Ovary (tissue), 10 donors: ENCODE measurements at regions of chr2 and their contacts with region 1.

Region 1: DNA sequence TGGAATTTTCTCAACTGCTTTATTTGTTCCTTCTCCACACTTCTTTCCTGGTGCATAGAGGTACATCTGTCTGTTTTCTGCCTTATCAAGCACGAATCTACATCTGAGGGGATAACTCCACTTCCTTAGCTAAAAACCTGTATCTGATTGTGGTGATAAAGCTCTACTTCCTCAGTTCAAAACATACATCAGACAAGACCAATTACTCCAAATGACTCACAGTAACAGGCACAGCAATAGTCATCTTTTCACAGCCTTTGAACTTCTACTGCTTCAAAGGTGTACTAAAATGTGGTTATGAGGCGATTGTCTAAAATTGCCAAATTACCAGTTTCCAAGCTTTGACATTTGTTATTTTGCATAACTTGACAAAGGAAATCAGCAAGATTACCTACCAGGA is 803.6 kb upstream of the ZEB2 start:
- DNase-seq: no peak
- H3K4me3 ChIP-seq: no peak overlapping the region
- H3K27ac ChIP-seq: no peak overlapping the region
- H3K4me1 ChIP-seq: peaks cover 2% of the 10 kb centered on the region
- H3K27me3 ChIP-seq: no peaks in the 10 kb centered on the region
- CTCF ChIP-seq: no peak
- EP300 ChIP-seq: no peak
- POLR2A ChIP-seq: no peak

Region 2: DNA sequence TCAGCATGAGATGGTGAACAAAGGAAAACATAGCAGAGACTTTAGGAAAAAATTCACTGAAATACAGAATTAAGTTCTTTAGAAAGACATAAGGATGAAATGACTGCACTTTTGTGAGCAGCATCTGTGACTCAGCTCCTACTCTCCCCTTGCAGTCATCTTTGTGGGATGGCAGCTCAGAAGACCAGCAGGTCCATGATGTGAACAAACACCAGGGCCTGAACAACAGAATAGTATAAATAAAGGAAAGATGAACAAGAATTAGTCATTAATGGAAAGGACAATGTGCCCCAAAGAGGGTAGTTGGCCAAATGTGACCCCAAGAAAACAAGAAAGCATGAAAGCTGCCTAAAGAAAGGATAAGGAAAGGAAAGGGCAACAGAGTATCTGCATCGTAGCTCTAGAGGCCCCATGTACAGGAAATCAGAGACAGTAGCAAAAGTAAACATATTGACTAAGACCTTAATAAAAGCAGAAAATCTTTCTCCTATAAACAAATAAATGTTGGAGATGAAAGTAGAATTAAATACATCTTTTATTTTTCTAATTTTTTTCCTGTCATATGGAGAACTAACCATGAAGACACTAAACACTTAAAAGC is 1121.5 kb before region 1 on chr2:
- intact Hi-C with region 1: loop called in 1 of 4 experiments (anchors 10 kb)
- DNase-seq: no peak
- H3K4me3 ChIP-seq: no peak overlapping the region
- H3K27ac ChIP-seq: no peak overlapping the region
- H3K4me1 ChIP-seq: peaks cover 1% of the 10 kb centered on the region
- H3K27me3 ChIP-seq: no peaks in the 10 kb centered on the region
- CTCF ChIP-seq: no peak
- EP300 ChIP-seq: no peak
- POLR2A ChIP-seq: no peak

Region 3: DNA sequence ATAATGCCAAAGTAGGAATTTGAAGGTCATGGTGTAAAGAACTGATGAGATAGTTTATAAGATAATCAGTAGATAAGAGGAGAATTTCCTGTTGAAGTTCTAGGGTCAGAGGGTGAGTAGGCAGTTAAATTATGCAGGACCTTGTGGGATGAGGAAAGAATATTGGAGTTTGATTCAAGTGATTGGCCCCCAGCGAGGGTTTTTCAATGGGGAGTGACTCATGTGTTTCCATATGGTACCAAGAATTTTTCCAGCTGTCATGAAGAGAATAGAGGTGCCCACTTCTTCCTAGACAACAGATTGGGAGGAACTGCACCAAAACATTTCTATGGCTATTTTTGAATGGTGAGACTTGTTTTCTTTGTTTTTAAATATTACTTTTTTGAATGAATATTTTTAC is 136.6 kb after region 1 on chr2:
- intact Hi-C with region 1: loop called in 1 of 4 experiments (anchors 5 kb)
- DNase-seq: no peak
- H3K4me3 ChIP-seq: no peak overlapping the region
- H3K27ac ChIP-seq: no peak overlapping the region
- H3K4me1 ChIP-seq: no peaks in the 10 kb centered on the region
- H3K27me3 ChIP-seq: no peaks in the 10 kb centered on the region
- CTCF ChIP-seq: no peak
- EP300 ChIP-seq: no peak
- POLR2A ChIP-seq: no peak